Activated CD4-positive, alpha-beta T cell treated with anti-CD3 and anti-CD28 coated beads, Interleukin-2, amount 10 ng/mL, durations not matched to agents 24 days and 14 days (primary cell): ENCODE measurements at regions of chrX and their contacts with region 1.

Region 1: GRCh38 chrX:56813318-56813837 is 84.3 kb downstream of the NBDY start:
- DNase-seq: peak; percentile 83
- H3K4me3 Mint-ChIP-seq: peak overlapping the region; percentile 82
- H3K27ac Mint-ChIP-seq: peak overlapping the region; percentile 99
- H3K4me1 Mint-ChIP-seq: peaks cover 25% of the 10 kb centered on the region
- H3K27me3 Mint-ChIP-seq: no peaks in the 10 kb centered on the region

Region 2: DNA sequence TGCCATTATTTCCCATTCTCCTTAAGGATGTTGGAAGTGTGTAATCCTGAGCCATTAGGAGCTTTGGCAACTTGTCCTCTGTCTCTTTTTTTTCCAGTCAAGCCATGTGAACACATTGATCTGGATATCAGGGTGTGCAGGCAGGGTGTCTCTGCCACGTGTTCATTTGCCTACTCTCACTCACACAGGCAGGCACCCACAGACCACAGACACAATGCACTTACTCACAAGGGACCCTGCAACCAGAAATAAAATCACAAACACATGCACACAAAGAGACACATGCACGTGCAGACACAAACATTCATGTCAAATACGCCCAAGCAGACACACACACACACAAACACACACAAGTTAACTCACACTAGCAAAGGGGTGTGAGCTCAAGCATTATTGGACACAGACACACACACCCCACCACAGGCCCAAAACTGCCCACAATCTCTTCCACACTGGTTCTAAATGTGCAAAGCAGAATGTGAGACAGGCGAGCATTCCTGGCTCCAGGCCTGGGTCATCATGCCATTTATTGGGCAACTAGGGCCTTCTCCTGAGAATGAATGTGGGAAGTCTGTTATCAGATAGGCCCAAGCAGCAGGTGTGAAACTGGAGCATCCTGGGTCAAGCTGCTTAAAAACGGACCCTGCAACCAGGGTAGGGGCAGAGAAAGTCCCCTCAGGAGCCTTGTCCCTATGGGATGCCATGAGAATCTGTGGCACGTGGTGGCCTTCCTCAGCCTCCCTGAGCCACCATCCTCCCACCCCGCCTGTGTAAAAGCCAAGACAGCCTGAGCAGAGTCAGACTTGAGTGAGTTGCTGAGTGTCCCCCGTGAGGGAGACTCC is 20.9 kb before region 1 on chrX:
- intact Hi-C with region 1: no loop called
- DNase-seq: no peak
- H3K4me3 Mint-ChIP-seq: no peak overlapping the region
- H3K27ac Mint-ChIP-seq: peak overlapping the region; percentile 48
- H3K4me1 Mint-ChIP-seq: peaks cover 13% of the 10 kb centered on the region
- H3K27me3 Mint-ChIP-seq: no peaks in the 10 kb centered on the region

Region 3: GRCh38 chrX:56802921-56803849 is 10.2 kb before region 1 on chrX:
- intact Hi-C with region 1: loop called (anchors 1 kb)
- DNase-seq: peak; percentile 86
- H3K4me3 Mint-ChIP-seq: peak overlapping the region; percentile 55
- H3K27ac Mint-ChIP-seq: peak overlapping the region; percentile 81
- H3K4me1 Mint-ChIP-seq: peaks cover 34% of the 10 kb centered on the region
- H3K27me3 Mint-ChIP-seq: no peaks in the 10 kb centered on the region

Region 4: DNA sequence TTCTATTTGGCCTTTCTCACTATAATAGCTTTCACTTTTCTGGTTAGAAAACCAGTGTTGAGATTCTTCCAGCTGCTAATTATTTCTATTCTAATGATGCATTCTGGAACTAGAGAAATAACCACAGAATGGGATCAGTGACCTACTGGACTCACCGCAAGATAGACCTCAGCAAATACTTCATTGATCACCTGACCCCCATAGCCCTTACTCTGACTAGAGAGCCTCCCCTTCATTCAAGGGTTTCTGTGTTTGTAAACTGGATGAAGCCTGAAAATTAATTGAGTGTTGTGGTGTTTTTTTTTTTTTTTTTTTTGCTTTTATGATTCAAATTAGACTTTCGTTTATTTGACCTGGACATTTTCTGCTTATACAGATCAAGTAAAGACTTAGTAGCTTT is 12.6 kb after region 1 on chrX:
- intact Hi-C with region 1: no loop called
- DNase-seq: no peak
- H3K4me3 Mint-ChIP-seq: no peak overlapping the region
- H3K27ac Mint-ChIP-seq: no peak overlapping the region
- H3K4me1 Mint-ChIP-seq: no peaks in the 10 kb centered on the region
- H3K27me3 Mint-ChIP-seq: no peaks in the 10 kb centered on the region

Region 5: DNA sequence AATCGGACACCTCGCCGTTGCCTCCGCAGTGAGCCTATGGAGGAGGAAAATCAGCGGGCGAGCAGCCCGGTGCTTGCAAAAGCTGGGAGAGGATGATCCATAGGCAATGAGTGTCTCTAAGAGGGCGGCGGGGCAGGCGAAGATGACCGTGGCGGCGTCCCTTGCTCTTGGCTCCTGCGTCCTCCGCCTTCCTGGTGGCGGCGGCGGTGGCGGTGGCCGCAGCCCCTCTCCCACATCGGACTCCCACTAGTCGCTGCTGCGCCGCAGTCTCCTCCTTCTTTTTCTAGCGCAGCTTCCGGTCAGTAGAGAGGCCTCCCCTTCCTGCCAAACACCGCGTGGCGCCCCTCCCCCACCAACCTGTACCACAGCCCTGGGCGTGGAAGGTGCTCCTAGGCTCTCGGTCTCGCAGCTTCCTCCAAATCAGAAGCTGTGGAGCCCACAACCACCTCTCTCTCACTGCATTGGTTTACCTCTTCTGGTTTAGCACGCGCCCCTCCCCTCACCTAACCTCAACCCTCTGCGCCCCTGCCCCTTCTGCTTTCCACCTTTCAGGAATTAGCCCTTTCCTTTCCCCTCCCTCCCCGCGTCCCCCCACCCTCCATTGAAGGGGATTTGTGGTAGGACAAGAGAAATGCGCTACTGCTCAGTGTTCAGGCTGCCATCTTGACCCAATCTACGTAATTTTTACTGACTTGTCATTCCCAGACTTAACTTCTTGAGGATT is 182.1 kb after region 1 on chrX and contains the start of gene SPIN3:
- intact Hi-C with region 1: loop called (anchors 5 kb)
- DNase-seq: peak; percentile 86
- H3K4me3 Mint-ChIP-seq: peak within 1 kb of the TSS; percentile 87
- H3K27ac Mint-ChIP-seq: peak within 1 kb of the TSS; percentile 91
- H3K4me1 Mint-ChIP-seq: peaks cover 25% of the 10 kb centered on the region
- H3K27me3 Mint-ChIP-seq: no peaks in the 10 kb centered on the region
- total RNA-seq, gene SPIN3: 9.3 and 9.5 TPM in 2 replicates

Region 6: GRCh38 chrX:57121162-57121741 is 307.9 kb after region 1 on chrX and contains the start of gene SPIN2B:
- intact Hi-C with region 1: loop called (anchors 10 kb)
- DNase-seq: peak; percentile 93
- H3K4me3 Mint-ChIP-seq: peak within 1 kb of the TSS; percentile 93
- H3K27ac Mint-ChIP-seq: peak within 1 kb of the TSS; percentile 90
- H3K4me1 Mint-ChIP-seq: peaks cover 8% of the 10 kb centered on the region
- H3K27me3 Mint-ChIP-seq: no peaks in the 10 kb centered on the region
- total RNA-seq, gene SPIN2B: 8.7 and 9.5 TPM in 2 replicates

Region 7: GRCh38 chrX:57595381-57595811 is 782.0 kb after region 1 on chrX:
- intact Hi-C with region 1: loop called (anchors 5 kb)
- DNase-seq: no peak
- H3K4me3 Mint-ChIP-seq: peak overlapping the region; percentile 74
- H3K27ac Mint-ChIP-seq: no peak overlapping the region
- H3K4me1 Mint-ChIP-seq: peaks cover 19% of the 10 kb centered on the region
- H3K27me3 Mint-ChIP-seq: no peaks in the 10 kb centered on the region

Region 8: GRCh38 chrX:57918750-57919436 is 1105.5 kb after region 1 on chrX:
- intact Hi-C with region 1: loop called (anchors 10 kb)
- DNase-seq: peak; percentile 81
- H3K4me3 Mint-ChIP-seq: no peak overlapping the region
- H3K27ac Mint-ChIP-seq: no peak overlapping the region
- H3K4me1 Mint-ChIP-seq: no peaks in the 10 kb centered on the region
- H3K27me3 Mint-ChIP-seq: no peaks in the 10 kb centered on the region